ENCODE measurements at regions of chr18 and their contacts with region 1.

Region 1: GRCh38 chr18:13629841-13630715 is 96.3 kb downstream of the FAM210A start:
- DNase-seq: no peak
- ATAC-seq: peak; percentile 86
- H3K4me3 ChIP-seq: no peak overlapping the region
- H3K27ac ChIP-seq: no peak overlapping the region
- H3K4me1 ChIP-seq: no peaks in the 10 kb centered on the region
- H3K27me3 ChIP-seq: no peaks in the 10 kb centered on the region
- CTCF ChIP-seq: peak; percentile 75

Region 2: GRCh38 chr18:13566941-13567746 is 62.9 kb before region 1 on chr18:
- intact Hi-C with region 1: loop called (anchors 10 kb)
- DNase-seq: peak; percentile 87
- ATAC-seq: peak; percentile 86
- H3K4me3 ChIP-seq: no peak overlapping the region
- H3K27ac ChIP-seq: peak overlapping the region; percentile 89
- H3K4me1 ChIP-seq: peaks cover 23% of the 10 kb centered on the region
- H3K27me3 ChIP-seq: no peaks in the 10 kb centered on the region
- CTCF ChIP-seq: no peak